ENCODE measurements at regions of chr18 and their contacts with region 1.

Region 1: GRCh38 chr18:72692086-72692485 is 147.9 kb upstream of the CBLN2 start:
- DNase-seq: no peak
- ATAC-seq: no peak
- H3K4me3 ChIP-seq: no peak overlapping the region
- H3K27ac ChIP-seq: no peak overlapping the region
- H3K4me1 ChIP-seq: no peaks in the 10 kb centered on the region
- H3K27me3 ChIP-seq: no peaks in the 10 kb centered on the region
- CTCF ChIP-seq: no peak
- POLR2A ChIP-seq: no peak
- RAD21 ChIP-seq: no peak

Region 2: GRCh38 chr18:72727038-72727655 is 35.1 kb after region 1 on chr18:
- CTCF ChIA-PET with region 1: no interaction called
- POLR2A ChIA-PET with region 1: no interaction called
- RAD21 ChIA-PET with region 1: no interaction called
- intact Hi-C with region 1: loop called (anchors 2 kb)
- DNase-seq: no peak
- ATAC-seq: no peak
- H3K4me3 ChIP-seq: no peak overlapping the region
- H3K27ac ChIP-seq: no peak overlapping the region
- H3K4me1 ChIP-seq: no peaks in the 10 kb centered on the region
- H3K27me3 ChIP-seq: no peaks in the 10 kb centered on the region
- CTCF ChIP-seq: no peak
- POLR2A ChIP-seq: no peak
- RAD21 ChIP-seq: no peak

Measured in HCT116 (cell line).